H1 (cell line): ENCODE measurements at regions of chr12 and their contacts with region 1.

Region 1: GRCh38 chr12:31989571-31990362 is 30.6 kb downstream of the RESF1 start:
- DNase-seq: no peak
- H3K4me3 ChIP-seq: no peak overlapping the region
- H3K27ac ChIP-seq: no peak overlapping the region
- H3K4me1 ChIP-seq: no peaks in the 10 kb centered on the region; a peak in 1 of 7 replicates
- H3K27me3 ChIP-seq: no peaks in the 10 kb centered on the region
- CTCF ChIP-seq: no peak
- EP300 ChIP-seq: no peak
- POLR2A ChIP-seq: no peak
- RAD21 ChIP-seq: no peak

Region 2: GRCh38 chr12:31973818-31974217 is 15.9 kb before region 1 on chr12:
- CTCF ChIA-PET with region 1: no interaction called
- POLR2A ChIA-PET with region 1: interaction called, 10 read pairs
- DNase-seq: no peak
- H3K4me3 ChIP-seq: no peak overlapping the region
- H3K27ac ChIP-seq: no peak overlapping the region
- H3K4me1 ChIP-seq: 0 out of 7 replicates have a peak, but pooled peaks cover 0 to 2% (median 0%) of the 10 kb centered on the region in 4 experiments
- H3K27me3 ChIP-seq: no peaks in the 10 kb centered on the region
- CTCF ChIP-seq: no peak
- EP300 ChIP-seq: no peak
- POLR2A ChIP-seq: no peak
- RAD21 ChIP-seq: no peak

Region 3: DNA sequence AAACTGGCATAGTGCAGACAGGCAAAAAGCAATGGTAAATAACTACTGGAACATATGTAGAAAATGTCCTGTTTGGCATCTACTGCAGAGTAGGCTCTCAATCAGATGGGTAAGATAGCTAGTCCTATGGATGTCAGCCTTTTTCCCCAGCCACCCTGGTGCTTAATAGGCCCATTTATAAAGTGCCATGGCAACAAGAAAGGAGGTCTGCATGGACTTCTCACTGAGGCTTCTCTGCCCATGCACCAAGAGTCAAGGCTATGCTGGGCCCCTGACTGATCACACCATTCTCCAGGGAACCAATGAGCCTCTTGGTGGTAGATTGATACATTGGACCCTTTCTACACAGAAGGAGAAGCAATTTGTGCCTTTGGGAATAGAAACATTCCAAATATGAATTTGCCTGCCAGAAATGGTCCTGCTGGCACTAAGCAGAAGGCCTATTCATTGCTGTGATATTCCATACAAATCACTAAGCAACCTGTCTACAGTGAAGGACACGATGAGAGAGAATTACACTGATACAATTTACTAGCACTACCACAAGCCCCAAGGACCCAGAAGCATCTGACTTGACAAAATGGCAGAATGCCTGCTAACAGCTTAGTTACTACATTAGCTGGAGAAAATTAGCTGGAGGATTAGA is 13.2 kb after region 1 on chr12:
- CTCF ChIA-PET with region 1: interaction called, 11 read pairs
- POLR2A ChIA-PET with region 1: interaction called, 7 read pairs
- DNase-seq: no peak
- H3K4me3 ChIP-seq: no peak overlapping the region
- H3K27ac ChIP-seq: no peak overlapping the region; the same call in 1 of the 2 replicates
- H3K4me1 ChIP-seq: no peaks in the 10 kb centered on the region
- H3K27me3 ChIP-seq: no peaks in the 10 kb centered on the region
- CTCF ChIP-seq: no peak
- EP300 ChIP-seq: no peak
- POLR2A ChIP-seq: peak in 1 of 2 experiments; percentile 19; a peak in 1 of 3 replicates
- RAD21 ChIP-seq: no peak

Region 4: GRCh38 chr12:32039347-32039746 is 49.6 kb after region 1 on chr12:
- CTCF ChIA-PET with region 1: no interaction called
- POLR2A ChIA-PET with region 1: no interaction called
- DNase-seq: no peak
- H3K4me3 ChIP-seq: no peak overlapping the region
- H3K27ac ChIP-seq: no peak overlapping the region
- H3K4me1 ChIP-seq: peaks cover 0 to 14% (median 2%) of the 10 kb centered on the region in 4 experiments; a peak in 2 of 7 replicates
- H3K27me3 ChIP-seq: no peaks in the 10 kb centered on the region
- CTCF ChIP-seq: no peak
- EP300 ChIP-seq: no peak
- POLR2A ChIP-seq: no peak
- RAD21 ChIP-seq: no peak

Region 5: GRCh38 chr12:32053881-32054624 is 64.3 kb after region 1 on chr12:
- CTCF ChIA-PET with region 1: no interaction called
- POLR2A ChIA-PET with region 1: no interaction called
- DNase-seq: no peak
- H3K4me3 ChIP-seq: no peak overlapping the region
- H3K27ac ChIP-seq: no peak overlapping the region
- H3K4me1 ChIP-seq: peaks cover 0 to 7% (median 1%) of the 10 kb centered on the region in 4 experiments; a peak in 2 of 7 replicates
- H3K27me3 ChIP-seq: no peaks in the 10 kb centered on the region
- CTCF ChIP-seq: no peak
- EP300 ChIP-seq: no peak
- POLR2A ChIP-seq: no peak
- RAD21 ChIP-seq: no peak

Region 6: DNA sequence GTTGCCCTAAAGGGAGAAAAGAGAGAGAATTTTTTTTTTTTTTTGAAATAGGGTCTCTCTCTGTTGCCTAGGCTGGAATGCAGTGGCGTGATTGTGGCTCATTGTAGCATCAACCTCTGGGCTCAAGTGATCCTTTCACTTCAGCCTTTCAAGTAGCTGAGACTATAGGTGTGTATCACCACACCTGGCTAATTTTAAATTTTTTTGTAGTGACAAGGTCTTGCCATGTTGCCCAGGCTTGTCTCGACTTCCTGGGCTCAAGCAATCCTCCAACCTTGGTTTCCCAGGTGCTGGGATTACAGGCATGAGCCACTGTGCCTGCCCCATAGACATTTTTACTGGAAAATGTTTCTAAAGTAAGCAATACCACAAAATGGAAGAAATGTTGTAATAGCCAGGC is 729.2 kb after region 1 on chr12:
- CTCF ChIA-PET with region 1: no interaction called
- POLR2A ChIA-PET with region 1: no interaction called
- DNase-seq: no peak
- H3K4me3 ChIP-seq: no peak overlapping the region
- H3K27ac ChIP-seq: no peak overlapping the region
- H3K4me1 ChIP-seq: no peaks in the 10 kb centered on the region
- H3K27me3 ChIP-seq: no peaks in the 10 kb centered on the region
- CTCF ChIP-seq: no peak
- EP300 ChIP-seq: no peak
- POLR2A ChIP-seq: no peak
- RAD21 ChIP-seq: no peak